SK-N-SH (cell line): ENCODE measurements at regions of chr1 and their contacts with region 1.

Region 1: GRCh38 chr1:55337801-55338447 is 122.8 kb upstream of the USP24 start:
- DNase-seq: peak; percentile 48
- H3K4me3 ChIP-seq: no peak overlapping the region
- H3K27ac ChIP-seq: no peak overlapping the region
- H3K4me1 ChIP-seq: no peaks in the 10 kb centered on the region
- H3K27me3 ChIP-seq: no peaks in the 10 kb centered on the region
- CTCF ChIP-seq: peak; percentile 71
- EP300 ChIP-seq: no peak
- RAD21 ChIP-seq: peak; percentile 76

Region 2: DNA sequence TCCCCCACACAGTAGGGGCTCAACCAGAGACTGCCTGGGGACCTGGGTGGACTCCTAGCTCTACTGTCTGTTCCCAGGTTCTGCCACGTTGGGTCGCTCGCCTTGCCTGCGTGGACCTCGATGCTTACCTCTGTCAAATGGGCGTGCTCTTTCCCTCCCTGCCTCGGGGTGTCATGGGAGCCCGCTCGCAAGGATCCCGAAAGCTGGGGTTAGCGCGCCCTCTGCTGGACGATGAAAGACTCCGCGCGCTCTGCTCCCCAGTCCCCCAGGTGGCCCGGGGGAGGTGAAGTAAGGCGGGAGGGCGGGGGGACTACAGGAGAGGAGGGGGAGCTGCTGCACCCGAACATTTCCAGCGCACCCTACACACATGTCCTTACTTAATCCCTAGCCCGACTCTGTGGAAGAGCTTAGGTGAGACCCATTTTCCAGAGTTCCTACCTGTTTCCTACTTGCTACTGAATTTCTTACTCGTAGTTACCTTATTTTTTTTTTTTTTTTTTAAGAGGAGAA is 341.5 kb before region 1 on chr1:
- CTCF ChIA-PET with region 1: no interaction called
- POLR2A ChIA-PET with region 1: no interaction called
- DNase-seq: peak; percentile 96
- H3K4me3 ChIP-seq: peak overlapping the region in 1 of 2 experiments; percentile 49; a peak in 1 of 4 replicates
- H3K27ac ChIP-seq: no peak overlapping the region
- H3K4me1 ChIP-seq: peaks cover 0 to 3% of the 10 kb centered on the region in 2 experiments; a peak in 1 of 4 replicates
- H3K27me3 ChIP-seq: no peaks in the 10 kb centered on the region; the same call in 1 of the 2 replicates
- CTCF ChIP-seq: peak; percentile 87
- EP300 ChIP-seq: no peak
- RAD21 ChIP-seq: peak; percentile 86

Region 3: DNA sequence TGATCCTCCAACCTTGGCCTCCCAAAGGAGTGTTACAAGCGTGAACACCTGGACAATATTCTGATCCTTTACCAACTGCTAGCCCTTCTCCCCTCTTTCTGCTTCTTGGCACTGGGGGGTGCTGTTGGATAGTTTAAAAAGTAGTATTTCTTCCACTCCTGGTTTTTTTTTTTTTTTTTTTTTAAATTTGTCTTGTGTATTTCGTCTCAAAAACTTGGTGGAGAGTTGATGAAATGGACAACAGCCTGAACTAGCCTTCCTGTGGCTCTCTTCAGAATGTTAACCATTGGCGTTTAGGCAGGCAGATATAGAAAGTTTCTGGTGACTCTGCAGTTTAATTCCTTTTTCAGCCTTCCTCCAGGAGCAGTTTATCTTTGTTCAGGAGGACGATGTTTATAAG is 53.1 kb before region 1 on chr1:
- CTCF ChIA-PET with region 1: interaction called, 13 read pairs
- POLR2A ChIA-PET with region 1: no interaction called
- DNase-seq: peak; percentile 36
- H3K4me3 ChIP-seq: no peak overlapping the region
- H3K27ac ChIP-seq: peak overlapping the region in 1 of 2 experiments; percentile 82; a peak in 2 of 4 replicates
- H3K4me1 ChIP-seq: peaks cover 3 to 4% of the 10 kb centered on the region in 2 experiments; a peak in 3 of 4 replicates
- H3K27me3 ChIP-seq: no peaks in the 10 kb centered on the region
- CTCF ChIP-seq: peak; percentile 78
- EP300 ChIP-seq: 0 out of 4 replicates have a peak, but pooled peaks of 1 of the 2 experiments have one; percentile 29
- RAD21 ChIP-seq: peak; percentile 84

Region 4: DNA sequence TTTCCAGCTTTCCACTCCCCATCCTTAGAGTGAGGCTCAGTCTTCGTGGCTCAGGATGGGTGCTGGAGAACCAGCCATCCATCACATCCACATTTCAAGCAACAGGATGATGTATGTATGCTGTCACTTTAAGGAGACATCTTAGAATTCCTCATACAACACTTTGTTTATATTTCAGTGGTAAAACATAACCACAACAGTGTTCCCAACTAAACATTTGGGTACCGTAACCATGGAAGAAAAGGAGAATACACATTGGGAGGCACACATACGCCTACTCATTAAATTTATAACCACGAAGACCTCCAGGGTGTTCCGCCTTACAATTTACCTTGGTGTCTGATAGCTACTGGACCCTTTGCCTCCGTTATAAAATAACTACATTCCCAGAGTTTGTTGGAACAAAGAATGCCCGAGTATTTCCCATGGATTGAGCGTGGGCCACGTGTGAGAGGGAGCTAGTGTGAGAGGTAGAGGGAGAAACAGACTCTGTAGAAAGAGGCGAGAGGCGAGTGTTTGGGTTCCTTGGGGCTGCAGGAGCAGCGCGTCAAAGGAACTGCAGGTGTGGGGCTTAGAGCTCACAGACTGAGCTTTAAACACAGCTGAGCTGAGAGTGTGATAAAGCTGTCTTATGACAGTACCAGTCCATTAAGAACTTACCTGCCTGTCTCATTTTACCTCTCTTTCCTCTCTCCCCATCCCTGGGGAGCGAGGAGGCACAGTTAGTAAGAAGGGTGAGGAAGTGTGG is 11.3 kb before region 1 on chr1:
- CTCF ChIA-PET with region 1: interaction called, 13 read pairs
- POLR2A ChIA-PET with region 1: no interaction called
- DNase-seq: no peak
- H3K4me3 ChIP-seq: no peak overlapping the region
- H3K27ac ChIP-seq: no peak overlapping the region
- H3K4me1 ChIP-seq: 0 out of 4 replicates have a peak, but pooled peaks cover 0 to 5% of the 10 kb centered on the region in 2 experiments
- H3K27me3 ChIP-seq: no peaks in the 10 kb centered on the region
- CTCF ChIP-seq: no peak
- EP300 ChIP-seq: no peak
- RAD21 ChIP-seq: no peak